ENCODE measurements at regions of chr2 and their contacts with region 1.

Region 1: GRCh38 chr2:171922230-171923022 is at the start of gene HAT1:
- DNase-seq: peak; percentile 99
- H3K4me3 Mint-ChIP-seq: peak within 1 kb of the TSS; percentile 88
- H3K27ac Mint-ChIP-seq: peak within 1 kb of the TSS; percentile 97
- H3K4me1 Mint-ChIP-seq: peaks cover 34% of the 10 kb centered on the region
- H3K27me3 Mint-ChIP-seq: no peaks in the 10 kb centered on the region
- total RNA-seq, gene HAT1: 74.6 to 77.2 TPM

Region 2: GRCh38 chr2:171433763-171434670 is 488.4 kb before region 1 on chr2 and contains the starts of genes DCAF17 and METTL8:
- CTCF ChIA-PET with region 1: no interaction called
- intact Hi-C with region 1: loop called (anchors 1 kb)
- DNase-seq: peak; percentile 96
- H3K4me3 Mint-ChIP-seq: peak within 1 kb of the TSS; percentile 86
- H3K27ac Mint-ChIP-seq: peak within 1 kb of the TSS; percentile 94
- H3K4me1 Mint-ChIP-seq: peaks cover 54% of the 10 kb centered on the region
- H3K27me3 Mint-ChIP-seq: no peaks in the 10 kb centered on the region
- total RNA-seq, gene DCAF17: 21.1 to 21.3 TPM
- total RNA-seq, gene METTL8: 32.9 to 34.5 TPM

Region 3: GRCh38 chr2:171687287-171688128 is 234.9 kb before region 1 on chr2 and contains the start of gene DYNC1I2:
- CTCF ChIA-PET with region 1: no interaction called
- intact Hi-C with region 1: loop called (anchors 1 kb)
- DNase-seq: peak; percentile 88
- H3K4me3 Mint-ChIP-seq: peak within 1 kb of the TSS; percentile 84
- H3K27ac Mint-ChIP-seq: peak within 1 kb of the TSS; percentile 85
- H3K4me1 Mint-ChIP-seq: peaks cover 15% of the 10 kb centered on the region
- H3K27me3 Mint-ChIP-seq: no peaks in the 10 kb centered on the region
- total RNA-seq, gene DYNC1I2: 37.8 to 38.9 TPM

Region 4: DNA sequence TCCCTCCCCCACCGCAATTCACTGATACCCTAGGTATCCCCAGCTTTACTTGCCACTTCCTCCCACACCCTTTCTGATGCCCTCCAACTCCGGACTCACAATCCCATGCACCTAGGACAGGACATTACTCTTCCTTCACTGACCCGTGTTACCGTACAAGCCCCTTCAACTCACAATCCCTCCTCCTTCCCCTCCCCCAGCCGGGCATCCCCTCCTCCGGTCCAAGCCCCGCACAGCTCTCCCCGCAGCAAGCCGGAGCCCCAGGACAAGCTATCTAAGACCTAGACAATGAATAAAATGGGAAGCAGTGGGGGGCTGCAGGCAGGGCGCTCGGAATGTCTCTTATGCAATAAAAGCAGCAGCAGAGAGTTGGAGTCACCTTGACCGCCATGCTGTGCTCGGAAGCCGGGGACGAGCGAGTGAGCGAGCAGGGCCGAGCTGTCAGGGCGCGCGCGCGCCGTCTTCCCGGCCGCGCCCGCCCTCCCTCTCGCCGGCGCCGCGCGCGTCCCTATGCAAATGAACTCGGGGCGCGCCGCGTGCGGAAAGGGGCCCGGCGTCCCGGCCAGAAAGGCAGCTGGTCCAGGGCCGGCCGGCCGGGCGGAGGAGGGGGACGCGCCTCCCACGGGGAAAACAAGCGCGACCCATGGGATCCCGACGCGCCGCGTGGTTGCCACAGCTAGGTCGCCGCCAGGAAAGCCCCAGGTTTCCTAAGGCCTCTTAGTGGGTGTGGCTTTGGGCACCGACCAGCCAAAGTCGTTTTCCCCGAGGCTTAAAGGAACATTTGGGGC is 28.4 kb before region 1 on chr2 and contains the start of gene SLC25A12:
- CTCF ChIA-PET with region 1: no interaction called
- intact Hi-C with region 1: loop called (anchors 1 kb)
- DNase-seq: peak; percentile 78
- H3K4me3 Mint-ChIP-seq: peak within 1 kb of the TSS; percentile 100
- H3K27ac Mint-ChIP-seq: peak within 1 kb of the TSS; percentile 94
- H3K4me1 Mint-ChIP-seq: peaks cover 42% of the 10 kb centered on the region
- H3K27me3 Mint-ChIP-seq: no peaks in the 10 kb centered on the region
- total RNA-seq, gene SLC25A12: 15.0 to 17.4 TPM

Region 5: DNA sequence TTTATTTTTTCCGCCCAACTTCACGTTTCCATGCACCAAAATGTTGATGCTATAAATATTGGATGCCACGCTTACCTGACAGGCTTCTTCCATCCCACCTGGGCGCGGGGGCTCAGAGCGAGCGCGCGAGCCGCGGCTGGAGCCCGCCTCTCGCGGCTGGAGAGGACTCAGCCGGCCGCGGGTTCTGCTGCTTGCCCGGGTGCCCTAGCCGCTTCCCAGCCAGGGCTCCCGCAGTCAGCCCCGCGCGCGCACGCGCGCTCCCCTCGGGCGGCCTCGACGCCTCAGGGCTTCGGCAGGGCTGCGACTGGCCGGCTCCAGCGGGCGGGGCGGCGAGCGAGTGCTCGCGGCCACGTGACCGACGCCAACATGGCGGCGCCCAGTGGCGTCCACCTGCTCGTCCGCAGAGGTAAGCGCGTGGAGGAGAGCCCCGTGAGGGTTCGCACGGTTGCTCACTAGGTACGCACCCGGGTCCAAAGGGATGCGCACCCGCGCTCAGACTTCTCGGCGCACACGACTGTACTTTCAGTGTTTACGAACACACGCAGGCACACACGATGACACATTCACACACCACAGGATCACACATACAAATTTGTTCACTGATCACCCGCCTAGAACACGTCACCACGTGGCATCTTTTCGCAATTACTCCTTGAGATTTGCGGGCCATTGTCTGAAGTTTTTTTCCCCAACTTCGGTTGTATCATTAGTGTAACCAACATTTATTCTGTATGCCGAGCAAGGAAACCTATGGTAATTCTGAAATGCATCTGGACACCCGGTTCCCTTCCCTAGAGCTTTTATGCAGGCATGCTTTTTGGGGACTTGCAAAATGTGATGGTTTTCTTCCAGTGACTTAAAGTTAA is 77.4 kb after region 1 on chr2 and contains the start of gene METAP1D:
- CTCF ChIA-PET with region 1: no interaction called
- intact Hi-C with region 1: loop called (anchors 1 kb)
- DNase-seq: peak; percentile 88
- H3K4me3 Mint-ChIP-seq: peak within 1 kb of the TSS; percentile 94
- H3K27ac Mint-ChIP-seq: peak within 1 kb of the TSS; percentile 89
- H3K4me1 Mint-ChIP-seq: peaks cover 25% of the 10 kb centered on the region
- H3K27me3 Mint-ChIP-seq: no peaks in the 10 kb centered on the region
- total RNA-seq, gene METAP1D: 2.5 to 3.4 TPM

Region 6: DNA sequence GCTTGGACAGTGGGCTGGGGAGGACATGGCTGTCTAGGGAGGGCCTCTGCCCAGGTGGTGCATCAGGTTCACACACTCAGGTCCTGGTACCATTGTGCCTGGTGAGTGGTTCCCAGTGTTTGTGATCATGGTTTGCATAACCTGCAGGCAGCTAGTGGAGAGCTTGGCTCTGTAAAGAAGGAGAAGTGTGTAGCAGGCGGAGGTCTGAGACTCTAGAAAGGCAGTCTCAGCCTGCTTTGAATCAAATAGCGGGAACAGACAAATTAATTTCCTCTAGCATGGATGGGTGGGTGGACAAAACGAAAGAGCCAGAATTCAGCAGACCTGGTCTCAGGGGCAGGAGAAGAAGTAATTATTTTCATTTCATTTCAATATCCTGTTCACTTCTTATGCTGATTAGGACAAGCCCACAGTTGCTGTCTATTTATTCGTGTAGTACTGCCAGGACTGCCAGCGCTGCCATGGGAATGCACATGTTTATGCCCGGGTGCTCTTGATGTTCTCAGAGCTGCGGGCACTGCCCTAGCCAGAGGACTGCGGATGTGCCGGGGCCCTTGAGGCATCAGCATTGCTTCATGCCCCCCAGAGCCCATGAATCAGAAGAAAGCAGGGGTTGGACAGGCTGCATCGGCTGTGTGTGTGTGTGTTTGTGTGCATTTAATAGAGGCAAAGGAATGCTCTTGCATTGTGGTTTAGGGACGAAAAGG is 225.7 kb after region 1 on chr2:
- CTCF ChIA-PET with region 1: no interaction called
- intact Hi-C with region 1: no loop called
- DNase-seq: no peak
- H3K4me3 Mint-ChIP-seq: no peak overlapping the region
- H3K27ac Mint-ChIP-seq: no peak overlapping the region
- H3K4me1 Mint-ChIP-seq: peaks cover 2% of the 10 kb centered on the region
- H3K27me3 Mint-ChIP-seq: peaks cover under 1% of the 10 kb centered on the region

Region 7: DNA sequence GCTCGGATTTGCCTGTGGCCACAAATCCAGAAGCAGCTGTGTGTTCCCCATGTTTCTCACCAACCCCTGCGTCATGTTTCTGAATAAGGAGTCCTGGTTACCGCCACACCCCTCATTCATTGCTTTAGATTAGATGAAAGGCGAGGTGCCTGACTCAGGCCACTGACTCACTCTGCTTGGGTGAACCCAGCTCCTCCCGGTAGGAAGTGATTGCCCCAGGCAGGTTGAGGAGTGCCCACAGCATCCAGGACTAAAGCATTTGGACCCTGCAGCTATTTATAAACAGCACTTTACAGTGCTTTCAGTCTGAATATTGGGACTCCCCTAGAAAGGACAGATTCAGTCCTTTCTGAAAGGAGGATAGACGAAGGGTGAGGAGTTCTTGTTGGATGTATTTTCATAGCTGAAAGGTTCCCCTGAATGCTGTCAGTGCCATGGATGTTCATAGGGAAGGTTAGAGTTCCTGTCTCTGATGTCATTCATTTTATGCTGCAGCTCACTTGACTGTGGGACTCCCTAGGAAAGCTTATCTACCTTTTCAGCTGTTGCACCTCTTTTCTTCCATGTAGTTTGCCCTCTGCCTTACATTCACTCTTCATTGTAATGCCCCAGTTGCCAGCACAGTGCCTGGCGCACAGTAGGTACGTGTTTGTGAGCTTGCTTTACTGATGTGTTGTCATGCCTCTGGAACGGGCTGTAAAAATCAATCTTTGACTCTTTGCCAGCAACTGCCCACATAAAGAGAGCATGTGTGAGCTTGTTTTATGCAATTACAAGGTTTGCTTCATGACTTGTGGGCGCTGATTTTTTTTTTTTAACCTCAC is 519.9 kb after region 1 on chr2:
- CTCF ChIA-PET with region 1: no interaction called
- intact Hi-C with region 1: loop called (anchors 5 kb)
- DNase-seq: peak; percentile 87
- H3K4me3 Mint-ChIP-seq: peak overlapping the region; percentile 58
- H3K27ac Mint-ChIP-seq: no peak overlapping the region
- H3K4me1 Mint-ChIP-seq: peaks cover 69% of the 10 kb centered on the region
- H3K27me3 Mint-ChIP-seq: no peaks in the 10 kb centered on the region

Region 8: DNA sequence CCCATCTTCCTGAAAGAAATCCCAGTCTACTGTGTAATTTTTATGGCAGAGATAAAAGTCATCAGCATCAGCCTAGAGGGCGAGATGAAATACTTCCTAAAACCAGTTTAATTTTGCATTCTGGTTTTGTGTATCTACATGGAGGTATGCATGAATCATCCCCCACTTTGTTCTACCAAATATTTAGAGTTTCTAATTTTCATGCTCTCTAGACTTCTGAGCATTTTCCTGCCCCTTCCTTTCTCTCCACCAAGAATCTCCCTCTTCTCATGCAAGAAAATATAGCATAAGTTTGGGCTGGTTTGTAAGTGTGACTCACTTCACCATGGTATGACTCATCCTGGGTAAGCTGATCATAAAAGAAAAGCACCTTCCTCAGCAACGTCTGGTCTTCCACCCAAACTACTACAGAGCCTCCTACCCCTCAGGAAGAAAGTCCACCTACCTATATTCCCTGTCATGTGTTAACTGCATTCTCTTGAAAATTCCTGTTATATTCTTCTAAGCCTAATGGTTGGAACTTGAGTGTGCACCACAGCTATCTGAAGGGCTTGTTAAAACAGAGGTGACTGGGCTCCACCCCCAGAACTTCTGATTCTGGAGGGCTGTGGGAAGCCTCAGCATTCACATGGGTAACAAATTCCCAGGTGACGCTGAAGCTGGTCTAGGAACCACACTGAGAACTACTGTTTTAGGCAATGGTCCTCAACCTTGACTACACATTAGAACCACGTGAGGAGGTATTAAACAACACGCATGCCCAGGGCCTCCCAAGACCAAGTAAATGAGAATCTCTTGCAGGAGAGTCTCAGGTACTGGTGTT is 775.8 kb after region 1 on chr2:
- CTCF ChIA-PET with region 1: no interaction called
- intact Hi-C with region 1: loop called (anchors 10 kb)
- DNase-seq: peak; percentile 41
- H3K4me3 Mint-ChIP-seq: no peak overlapping the region
- H3K27ac Mint-ChIP-seq: no peak overlapping the region
- H3K4me1 Mint-ChIP-seq: peaks cover 25% of the 10 kb centered on the region
- H3K27me3 Mint-ChIP-seq: no peaks in the 10 kb centered on the region